ENCODE measurements at regions of chr2 and their contacts with region 1.

Region 1: DNA sequence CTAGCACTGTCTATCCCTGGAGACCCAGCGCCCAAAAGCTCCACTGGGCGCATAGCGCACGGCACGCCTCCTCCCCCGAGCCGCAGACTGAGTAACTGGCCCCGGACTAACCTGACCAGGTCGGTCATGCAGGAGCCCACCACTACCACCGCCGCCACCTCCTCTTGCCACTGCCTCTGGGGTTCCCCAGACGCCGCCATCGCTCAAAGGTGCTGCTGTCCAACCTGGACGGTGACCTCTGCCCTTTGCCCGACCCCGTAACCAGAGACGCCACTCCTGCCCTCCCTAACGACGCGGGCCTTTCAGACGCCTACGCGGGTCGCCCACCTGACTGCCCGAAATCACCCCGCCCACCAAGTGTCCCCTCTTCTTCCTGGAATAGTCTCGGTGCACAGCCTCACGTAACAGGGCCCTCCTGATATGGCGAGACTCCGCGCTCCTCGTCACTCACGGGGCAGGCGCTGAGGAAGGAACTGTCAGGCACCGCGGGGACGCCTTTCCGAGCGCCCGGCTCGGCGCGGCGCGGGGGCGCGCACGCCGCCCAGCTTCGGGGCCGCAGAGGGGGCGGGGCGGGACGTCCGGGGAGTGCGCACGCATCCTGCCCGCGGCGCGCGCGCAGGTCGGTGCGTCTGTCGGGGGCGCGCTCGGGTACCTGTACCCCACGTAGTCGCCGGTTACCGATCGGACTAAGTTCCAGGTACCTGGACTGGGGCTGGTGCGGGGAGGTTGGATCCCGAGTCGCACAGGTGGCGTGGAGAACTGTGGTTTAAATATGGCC is at the starts of genes BABAM2 and RBKS:
- DNase-seq: peak; percentile 83 to 98 (median 90)
- ATAC-seq: peak; percentile 73
- H3K4me3 ChIP-seq: peak within 1 kb of the TSS; percentile 79
- H3K4me3 Mint-ChIP-seq: peak within 1 kb of the TSS; percentile 97
- H3K27ac ChIP-seq: peak within 1 kb of the TSS; percentile 96 to 99
- H3K27ac Mint-ChIP-seq: peak within 1 kb of the TSS; percentile 100
- H3K4me1 ChIP-seq: peaks cover 23% of the 10 kb centered on the region
- H3K4me1 Mint-ChIP-seq: peaks cover 59% of the 10 kb centered on the region
- H3K27me3 ChIP-seq: no peaks in the 10 kb centered on the region
- H3K27me3 Mint-ChIP-seq: peaks cover 6% of the 10 kb centered on the region
- CTCF ChIP-seq: no peak
- total RNA-seq, gene BABAM2: 29.2 to 32.8 TPM
- total RNA-seq, gene RBKS: 2.6 to 3.0 TPM

Region 2: GRCh38 chr2:26764078-26764887 is 1126.1 kb before region 1 on chr2 and contains the start of gene SLC35F6:
- CTCF ChIA-PET with region 1: no interaction called
- POLR2A ChIA-PET with region 1: no interaction called
- intact Hi-C with region 1: loop called in 1 of 2 experiments (anchors 10 kb)
- DNase-seq: peak; percentile 64 to 94 (median 79)
- ATAC-seq: peak; percentile 95
- H3K4me3 ChIP-seq: peak within 1 kb of the TSS; percentile 100
- H3K4me3 Mint-ChIP-seq: peak within 1 kb of the TSS; percentile 97
- H3K27ac ChIP-seq: peak within 1 kb of the TSS; percentile 73 to 85
- H3K27ac Mint-ChIP-seq: peak within 1 kb of the TSS; percentile 81
- H3K4me1 ChIP-seq: peaks cover 53% of the 10 kb centered on the region
- H3K4me1 Mint-ChIP-seq: peaks cover 40% of the 10 kb centered on the region
- H3K27me3 ChIP-seq: no peaks in the 10 kb centered on the region
- H3K27me3 Mint-ChIP-seq: no peaks in the 10 kb centered on the region
- CTCF ChIP-seq: no peak
- total RNA-seq, gene SLC35F6: 32.0 to 34.2 TPM

Region 3: GRCh38 chr2:27489498-27490397 is 400.6 kb before region 1 on chr2 and contains the start of gene IFT172:
- CTCF ChIA-PET with region 1: no interaction called
- POLR2A ChIA-PET with region 1: no interaction called
- intact Hi-C with region 1: loop called in 1 of 2 experiments (anchors 5 kb)
- DNase-seq: peak; percentile 97 to 100 (median 99)
- ATAC-seq: peak; percentile 85
- H3K4me3 ChIP-seq: peak within 1 kb of the TSS; percentile 61
- H3K4me3 Mint-ChIP-seq: peak within 1 kb of the TSS; percentile 80
- H3K27ac ChIP-seq: peak within 1 kb of the TSS; percentile 55 to 91
- H3K27ac Mint-ChIP-seq: peak within 1 kb of the TSS; percentile 93
- H3K4me1 ChIP-seq: peaks cover 20% of the 10 kb centered on the region
- H3K4me1 Mint-ChIP-seq: peaks cover 18% of the 10 kb centered on the region
- H3K27me3 ChIP-seq: peaks cover 11 to 13% of the 10 kb centered on the region in 2 experiments
- H3K27me3 Mint-ChIP-seq: peaks cover 12% of the 10 kb centered on the region
- CTCF ChIP-seq: no peak
- total RNA-seq, gene IFT172: 13.3 to 14.4 TPM

Region 4: GRCh38 chr2:27622921-27623384 is 267.4 kb before region 1 on chr2:
- CTCF ChIA-PET with region 1: no interaction called
- POLR2A ChIA-PET with region 1: no interaction called
- intact Hi-C with region 1: no loop called
- DNase-seq: no peak
- ATAC-seq: no peak
- H3K4me3 ChIP-seq: no peak overlapping the region
- H3K4me3 Mint-ChIP-seq: no peak overlapping the region
- H3K27ac ChIP-seq: no peak overlapping the region
- H3K27ac Mint-ChIP-seq: peak overlapping the region; percentile 52
- H3K4me1 ChIP-seq: peaks cover under 1% of the 10 kb centered on the region
- H3K4me1 Mint-ChIP-seq: no peaks in the 10 kb centered on the region
- H3K27me3 ChIP-seq: no peaks in the 10 kb centered on the region
- H3K27me3 Mint-ChIP-seq: no peaks in the 10 kb centered on the region
- CTCF ChIP-seq: no peak

Region 5: DNA sequence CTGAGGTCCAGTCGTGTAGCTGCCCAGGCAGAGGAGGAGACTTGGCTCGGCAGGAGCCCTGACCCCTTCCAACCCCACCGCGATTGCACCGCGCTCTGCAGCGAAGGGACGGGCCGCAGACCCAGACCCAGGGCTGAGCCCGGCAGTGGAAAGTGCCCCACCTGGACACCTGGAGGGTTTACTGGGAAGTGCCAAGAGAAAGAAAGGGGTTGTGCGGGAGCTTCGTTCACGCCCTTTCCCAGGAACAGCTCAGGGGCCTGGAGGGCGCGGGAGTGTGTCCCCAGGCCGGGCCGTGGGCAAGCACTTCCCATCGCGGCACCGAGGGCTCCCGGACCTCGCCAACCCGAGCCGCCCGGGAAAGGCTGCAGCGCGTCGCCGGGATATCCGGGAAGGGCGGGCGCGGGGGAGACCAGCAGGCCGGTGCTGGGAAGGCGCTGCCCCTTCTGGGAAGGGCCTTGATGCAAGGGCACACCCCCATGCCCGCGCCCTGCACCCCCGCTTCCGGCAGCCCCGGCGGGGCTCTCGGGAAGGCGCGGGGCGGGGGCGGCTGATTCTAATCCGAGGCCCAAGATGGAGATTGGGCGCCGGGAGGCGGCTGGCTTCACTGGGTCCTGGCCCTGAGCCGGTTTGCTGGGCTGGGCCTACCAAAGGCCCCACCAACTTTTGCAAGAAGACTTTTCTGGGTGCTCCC is 154.9 kb before region 1 on chr2:
- CTCF ChIA-PET with region 1: no interaction called
- POLR2A ChIA-PET with region 1: no interaction called
- intact Hi-C with region 1: no loop called
- DNase-seq: peak in 12 of 14 experiments; percentile 19 to 68 (median 54)
- ATAC-seq: peak; percentile 92
- H3K4me3 ChIP-seq: peak overlapping the region; percentile 47
- H3K4me3 Mint-ChIP-seq: peak overlapping the region; percentile 78
- H3K27ac ChIP-seq: no peak overlapping the region
- H3K27ac Mint-ChIP-seq: peak overlapping the region; percentile 55
- H3K4me1 ChIP-seq: peaks cover 15% of the 10 kb centered on the region
- H3K4me1 Mint-ChIP-seq: peaks cover 13% of the 10 kb centered on the region
- H3K27me3 ChIP-seq: no peaks in the 10 kb centered on the region
- H3K27me3 Mint-ChIP-seq: no peaks in the 10 kb centered on the region
- CTCF ChIP-seq: no peak

Region 6: DNA sequence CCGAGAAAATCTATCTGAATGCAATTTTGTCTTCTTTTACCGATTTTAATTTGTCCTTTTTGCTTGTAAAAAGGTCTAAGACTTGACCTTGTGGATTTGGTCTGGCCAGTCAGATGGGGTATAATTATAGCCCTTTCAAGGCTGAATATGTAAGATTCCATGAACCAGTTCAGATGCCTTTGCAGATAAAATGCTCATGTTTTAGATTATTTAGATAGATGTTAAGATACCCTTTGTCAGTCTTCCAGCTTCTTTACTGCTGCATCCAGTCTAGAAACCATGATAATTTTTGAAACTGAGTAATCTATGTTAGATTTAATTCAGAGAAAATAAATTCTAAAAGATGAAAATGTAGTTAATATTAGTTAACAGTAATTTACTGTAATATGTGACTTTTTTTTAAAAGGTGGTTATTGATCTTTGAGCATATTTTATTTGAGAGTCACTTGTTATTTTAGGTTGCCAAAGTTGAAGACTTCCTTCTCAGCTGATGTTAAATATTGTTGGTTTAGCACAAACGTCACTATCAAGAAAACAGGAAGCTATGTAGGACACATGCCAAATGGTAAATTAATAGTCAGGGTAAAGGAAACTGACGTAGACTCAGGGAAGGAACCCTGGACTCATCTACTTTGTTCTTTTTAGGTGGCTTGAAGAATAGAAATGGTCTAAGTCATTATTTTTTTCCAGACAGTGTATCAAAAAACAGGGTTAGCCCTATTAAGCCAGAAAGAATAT is 30.0 kb after region 1 on chr2:
- CTCF ChIA-PET with region 1: interaction called, 5 read pairs
- POLR2A ChIA-PET with region 1: interaction called, 10 read pairs
- intact Hi-C with region 1: loop called in 1 of 2 experiments (anchors 1 kb)
- DNase-seq: peak in 3 of 14 experiments; percentile 75 to 84 (median 80)
- ATAC-seq: peak; percentile 96
- H3K4me3 ChIP-seq: no peak overlapping the region
- H3K4me3 Mint-ChIP-seq: no peak overlapping the region
- H3K27ac ChIP-seq: peak overlapping the region in 1 of 2 donors; percentile 23
- H3K27ac Mint-ChIP-seq: peak overlapping the region; percentile 73
- H3K4me1 ChIP-seq: no peaks in the 10 kb centered on the region
- H3K4me1 Mint-ChIP-seq: peaks cover 42% of the 10 kb centered on the region
- H3K27me3 ChIP-seq: no peaks in the 10 kb centered on the region
- H3K27me3 Mint-ChIP-seq: no peaks in the 10 kb centered on the region
- CTCF ChIP-seq: no peak

Region 7: GRCh38 chr2:28406276-28407096 is 516.2 kb after region 1 on chr2:
- CTCF ChIA-PET with region 1: no interaction called
- POLR2A ChIA-PET with region 1: interaction called, 3 read pairs
- intact Hi-C with region 1: loop called in 1 of 2 experiments (anchors 5 kb)
- DNase-seq: peak in 11 of 14 experiments; percentile 27 to 90 (median 62)
- ATAC-seq: peak; percentile 57
- H3K4me3 ChIP-seq: no peak overlapping the region
- H3K4me3 Mint-ChIP-seq: peak overlapping the region; percentile 60
- H3K27ac ChIP-seq: peak overlapping the region in 1 of 2 donors; percentile 75
- H3K27ac Mint-ChIP-seq: peak overlapping the region; percentile 90
- H3K4me1 ChIP-seq: peaks cover 90% of the 10 kb centered on the region
- H3K4me1 Mint-ChIP-seq: peaks cover 78% of the 10 kb centered on the region
- H3K27me3 ChIP-seq: no peaks in the 10 kb centered on the region
- H3K27me3 Mint-ChIP-seq: no peaks in the 10 kb centered on the region
- CTCF ChIP-seq: no peak

Measured in CD4-positive, alpha-beta T cell (primary cell).